B cell (primary cell): ENCODE measurements at regions of chr19 and their contacts with region 1.

Region 1: GRCh38 chr19:55258828-55259539 is at the start of gene PPP6R1:
- DNase-seq: peak; percentile 98
- ATAC-seq: peak; percentile 77
- H3K4me3 ChIP-seq: peak within 1 kb of the TSS; percentile 70 to 90 (median 80)
- H3K4me3 Mint-ChIP-seq: peak within 1 kb of the TSS; percentile 96
- H3K27ac ChIP-seq: peak within 1 kb of the TSS; percentile 67 to 96
- H3K27ac Mint-ChIP-seq: peak within 1 kb of the TSS; percentile 99
- H3K4me1 ChIP-seq: peaks cover 43 to 49% of the 10 kb centered on the region in 2 donors
- H3K4me1 Mint-ChIP-seq: peaks cover 52% of the 10 kb centered on the region
- H3K27me3 ChIP-seq: no peaks in the 10 kb centered on the region
- H3K27me3 Mint-ChIP-seq: no peaks in the 10 kb centered on the region
- CTCF ChIP-seq: no peak
- total RNA-seq, gene PPP6R1: 193 and 195 TPM in 2 replicates

Region 2: GRCh38 chr19:55178781-55179599 is 80.0 kb before region 1 on chr19:
- CTCF ChIA-PET with region 1: no interaction called
- POLR2A ChIA-PET with region 1: interaction called, 3 read pairs
- intact Hi-C with region 1: loop called (anchors 1 kb)
- DNase-seq: peak; percentile 98
- ATAC-seq: peak; percentile 83
- H3K4me3 ChIP-seq: peak overlapping the region in 4 of 5 experiments; percentile 31 to 60 (median 50)
- H3K4me3 Mint-ChIP-seq: peak overlapping the region; percentile 88
- H3K27ac ChIP-seq: peak overlapping the region in 1 of 2 donors; percentile 64
- H3K27ac Mint-ChIP-seq: peak overlapping the region; percentile 89
- H3K4me1 ChIP-seq: peaks cover 29 to 40% of the 10 kb centered on the region in 2 donors
- H3K4me1 Mint-ChIP-seq: peaks cover 29% of the 10 kb centered on the region
- H3K27me3 ChIP-seq: peaks cover 0 to 91% (median 56%) of the 10 kb centered on the region in 4 experiments
- H3K27me3 Mint-ChIP-seq: peaks cover 62% of the 10 kb centered on the region
- CTCF ChIP-seq: no peak

Region 3: GRCh38 chr19:55289117-55289796 is 30.3 kb after region 1 on chr19:
- CTCF ChIA-PET with region 1: interaction called, 16 read pairs
- POLR2A ChIA-PET with region 1: interaction called, 5 read pairs
- intact Hi-C with region 1: loop called (anchors 1 kb)
- DNase-seq: no peak
- ATAC-seq: no peak
- H3K4me3 ChIP-seq: no peak overlapping the region
- H3K4me3 Mint-ChIP-seq: no peak overlapping the region
- H3K27ac ChIP-seq: no peak overlapping the region
- H3K27ac Mint-ChIP-seq: no peak overlapping the region
- H3K4me1 ChIP-seq: peaks cover 4 to 6% of the 10 kb centered on the region in 2 donors
- H3K4me1 Mint-ChIP-seq: peaks cover 5% of the 10 kb centered on the region
- H3K27me3 ChIP-seq: no peaks in the 10 kb centered on the region
- H3K27me3 Mint-ChIP-seq: no peaks in the 10 kb centered on the region
- CTCF ChIP-seq: no peak

Region 4: GRCh38 chr19:55339048-55339888 is 80.3 kb after region 1 on chr19 and contains the start of gene KMT5C:
- CTCF ChIA-PET with region 1: interaction called, 5 read pairs
- POLR2A ChIA-PET with region 1: interaction called, 10 read pairs
- intact Hi-C with region 1: loop called (anchors 1 kb)
- DNase-seq: peak; percentile 100
- ATAC-seq: peak; percentile 79
- H3K4me3 ChIP-seq: peak within 1 kb of the TSS; percentile 65 to 91 (median 70)
- H3K4me3 Mint-ChIP-seq: peak within 1 kb of the TSS; percentile 94
- H3K27ac ChIP-seq: peak within 1 kb of the TSS; percentile 98
- H3K27ac Mint-ChIP-seq: peak within 1 kb of the TSS; percentile 93
- H3K4me1 ChIP-seq: peaks cover 16 to 28% of the 10 kb centered on the region in 2 donors
- H3K4me1 Mint-ChIP-seq: peaks cover 20% of the 10 kb centered on the region
- H3K27me3 ChIP-seq: peaks cover 0 to 23% (median 9%) of the 10 kb centered on the region in 4 experiments
- H3K27me3 Mint-ChIP-seq: peaks cover 19% of the 10 kb centered on the region
- CTCF ChIP-seq: no peak
- total RNA-seq, gene KMT5C: 19.6 and 22.2 TPM in 2 replicates

Region 5: GRCh38 chr19:55407800-55408532 is 149.0 kb after region 1 on chr19:
- CTCF ChIA-PET with region 1: no interaction called
- POLR2A ChIA-PET with region 1: interaction called, 11 read pairs
- intact Hi-C with region 1: loop called (anchors 1 kb)
- DNase-seq: peak; percentile 100
- ATAC-seq: peak; percentile 83
- H3K4me3 ChIP-seq: peak overlapping the region; percentile 55 to 89 (median 77)
- H3K4me3 Mint-ChIP-seq: peak overlapping the region; percentile 98
- H3K27ac ChIP-seq: peak overlapping the region; percentile 99 to 100
- H3K27ac Mint-ChIP-seq: peak overlapping the region; percentile 99
- H3K4me1 ChIP-seq: peaks cover 11 to 25% of the 10 kb centered on the region in 2 donors
- H3K4me1 Mint-ChIP-seq: peaks cover 32% of the 10 kb centered on the region
- H3K27me3 ChIP-seq: no peaks in the 10 kb centered on the region
- H3K27me3 Mint-ChIP-seq: no peaks in the 10 kb centered on the region
- CTCF ChIP-seq: no peak

Region 6: DNA sequence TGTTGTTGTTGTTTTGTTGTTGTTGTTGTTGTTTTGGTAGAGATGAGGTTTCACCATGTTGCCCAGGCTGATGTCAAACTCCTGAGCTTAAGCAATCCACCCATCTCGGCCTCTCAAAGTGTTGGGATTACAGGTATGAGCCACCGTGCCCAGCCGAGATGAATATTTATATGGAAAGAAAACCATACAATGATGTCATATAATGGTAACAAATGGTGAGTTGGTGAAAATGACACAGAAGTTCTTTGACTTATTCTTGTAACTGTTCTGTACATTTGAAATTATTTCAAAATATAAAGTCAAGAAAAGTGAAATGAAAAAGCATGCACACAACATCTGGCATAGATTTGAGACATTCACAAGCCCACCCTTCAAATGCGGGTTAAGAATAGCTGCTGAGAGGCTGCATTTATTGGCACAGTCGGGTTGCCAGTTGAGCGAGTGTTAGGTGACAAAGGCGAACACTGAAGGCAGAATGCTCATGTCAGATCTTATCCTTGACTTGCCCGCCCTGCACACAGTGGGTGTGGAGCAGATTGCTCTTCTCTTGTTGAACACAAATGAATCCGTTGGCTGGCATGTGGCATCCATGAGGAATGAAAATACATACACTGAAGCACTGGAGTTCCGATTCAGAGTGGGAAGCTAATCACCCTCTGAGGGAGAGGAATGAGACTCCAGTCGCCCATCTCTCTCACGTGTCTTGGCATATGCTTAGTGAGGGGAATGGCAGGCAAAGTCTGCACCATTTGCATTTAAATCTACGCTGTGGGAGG is 164.4 kb after region 1 on chr19:
- CTCF ChIA-PET with region 1: no interaction called
- POLR2A ChIA-PET with region 1: no interaction called
- intact Hi-C with region 1: no loop called
- DNase-seq: no peak
- ATAC-seq: no peak
- H3K4me3 ChIP-seq: no peak overlapping the region
- H3K4me3 Mint-ChIP-seq: no peak overlapping the region
- H3K27ac ChIP-seq: no peak overlapping the region
- H3K27ac Mint-ChIP-seq: no peak overlapping the region
- H3K4me1 ChIP-seq: no peaks in the 10 kb centered on the region
- H3K4me1 Mint-ChIP-seq: no peaks in the 10 kb centered on the region
- H3K27me3 ChIP-seq: peaks cover 0 to 19% (median 3%) of the 10 kb centered on the region in 4 experiments
- H3K27me3 Mint-ChIP-seq: peaks cover 27% of the 10 kb centered on the region
- CTCF ChIP-seq: no peak

Region 7: GRCh38 chr19:55476100-55476775 is 217.3 kb after region 1 on chr19 and contains the start of gene ZNF628:
- CTCF ChIA-PET with region 1: no interaction called
- POLR2A ChIA-PET with region 1: interaction called, 11 read pairs
- intact Hi-C with region 1: loop called (anchors 1 kb)
- DNase-seq: peak; percentile 99
- ATAC-seq: peak; percentile 90
- H3K4me3 ChIP-seq: peak within 1 kb of the TSS; percentile 63 to 97 (median 77)
- H3K4me3 Mint-ChIP-seq: peak within 1 kb of the TSS; percentile 95
- H3K27ac ChIP-seq: peak within 1 kb of the TSS; percentile 69 to 92
- H3K27ac Mint-ChIP-seq: peak within 1 kb of the TSS; percentile 97
- H3K4me1 ChIP-seq: peaks cover 15 to 21% of the 10 kb centered on the region in 2 donors
- H3K4me1 Mint-ChIP-seq: peaks cover 34% of the 10 kb centered on the region
- H3K27me3 ChIP-seq: no peaks in the 10 kb centered on the region
- H3K27me3 Mint-ChIP-seq: no peaks in the 10 kb centered on the region
- CTCF ChIP-seq: no peak
- total RNA-seq, gene ZNF628: 13.3 and 15.5 TPM in 2 replicates

Region 8: GRCh38 chr19:55599468-55600279 is 340.7 kb after region 1 on chr19 and contains the start of gene FIZ1:
- CTCF ChIA-PET with region 1: no interaction called
- POLR2A ChIA-PET with region 1: interaction called, 5 read pairs
- intact Hi-C with region 1: loop called (anchors 10 kb)
- DNase-seq: peak; percentile 99
- ATAC-seq: peak; percentile 70
- H3K4me3 ChIP-seq: peak within 1 kb of the TSS; percentile 59 to 97 (median 82)
- H3K4me3 Mint-ChIP-seq: peak within 1 kb of the TSS; percentile 100
- H3K27ac ChIP-seq: peak within 1 kb of the TSS; percentile 86 to 94
- H3K27ac Mint-ChIP-seq: peak within 1 kb of the TSS; percentile 99
- H3K4me1 ChIP-seq: peaks cover 9 to 24% of the 10 kb centered on the region in 2 donors
- H3K4me1 Mint-ChIP-seq: peaks cover 25% of the 10 kb centered on the region
- H3K27me3 ChIP-seq: no peaks in the 10 kb centered on the region
- H3K27me3 Mint-ChIP-seq: no peaks in the 10 kb centered on the region
- CTCF ChIP-seq: no peak
- total RNA-seq, gene FIZ1: 21.4 and 26.4 TPM in 2 replicates